ENCODE measurements at regions of chr19 and their contacts with region 1.

Region 1: DNA sequence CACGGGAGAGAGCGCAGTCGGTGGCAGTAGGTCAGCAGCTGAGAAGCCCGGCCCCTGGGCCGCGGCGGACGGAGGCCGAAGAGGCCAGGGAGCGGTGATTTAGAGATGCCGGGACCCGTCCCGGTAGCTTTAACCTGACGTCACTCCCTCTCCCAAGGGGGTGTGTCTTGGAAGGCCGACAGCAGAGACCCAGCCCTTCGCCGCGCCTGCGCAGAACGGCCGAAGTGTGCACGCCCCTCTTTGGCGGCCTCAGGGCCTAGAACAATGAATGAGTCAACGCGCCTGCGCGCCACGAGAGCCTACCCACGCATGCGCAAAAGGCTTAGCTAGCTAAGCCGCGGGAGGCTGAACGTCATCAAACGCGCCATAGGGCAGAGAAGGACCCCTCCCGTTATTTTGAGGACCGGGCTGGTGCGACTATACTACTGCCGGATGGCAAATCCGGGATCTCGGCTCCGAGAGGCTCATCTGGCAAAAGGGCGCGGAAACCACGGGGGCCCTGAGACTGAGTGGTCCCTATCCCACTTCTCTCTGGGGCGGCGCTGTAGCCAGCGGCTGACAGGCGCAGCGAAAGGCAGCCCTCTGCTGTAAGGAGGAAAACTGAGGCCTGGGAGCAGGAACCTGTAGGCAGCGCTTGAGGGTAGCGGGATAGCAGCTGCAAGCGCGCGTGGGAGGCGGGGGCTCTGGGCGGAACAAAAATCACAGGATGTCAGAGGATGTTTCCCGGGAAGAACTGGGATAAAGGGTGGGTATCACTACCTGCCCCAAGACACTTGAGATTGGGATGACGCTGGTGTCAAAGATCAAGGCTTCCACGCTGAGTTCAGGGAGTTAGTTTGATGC is at the starts of genes IRGQ and ZNF576:
- DNase-seq: peak; percentile 99 to 100 (median 100)
- ATAC-seq: peak; percentile 74 to 79
- H3K4me3 Mint-ChIP-seq: peak within 1 kb of the TSS; percentile 94 to 99 (median 96)
- H3K27ac Mint-ChIP-seq: peak within 1 kb of the TSS; percentile 96 to 100 (median 100)
- H3K4me1 Mint-ChIP-seq: peaks cover 26 to 53% (median 47%) of the 10 kb centered on the region in 4 donors
- H3K27me3 Mint-ChIP-seq: peaks cover 0 to 2% (median 0%) of the 10 kb centered on the region in 5 donors
- polyA plus RNA-seq, gene IRGQ: 0.37 to 1.1 (median 0.82) TPM
- polyA plus RNA-seq, gene ZNF576: 6.2 to 10.4 (median 9.3) TPM

Region 2: GRCh38 chr19:43337737-43338136 is 258.5 kb before region 1 on chr19:
- POLR2A ChIA-PET with region 1: no interaction called
- DNase-seq: no peak
- ATAC-seq: no peak
- H3K4me3 Mint-ChIP-seq: no peak overlapping the region
- H3K27ac Mint-ChIP-seq: no peak overlapping the region
- H3K4me1 Mint-ChIP-seq: peaks cover 0 to 6% (median 0%) of the 10 kb centered on the region in 4 donors
- H3K27me3 Mint-ChIP-seq: peaks cover 9 to 34% (median 22%) of the 10 kb centered on the region in 5 donors

Region 3: DNA sequence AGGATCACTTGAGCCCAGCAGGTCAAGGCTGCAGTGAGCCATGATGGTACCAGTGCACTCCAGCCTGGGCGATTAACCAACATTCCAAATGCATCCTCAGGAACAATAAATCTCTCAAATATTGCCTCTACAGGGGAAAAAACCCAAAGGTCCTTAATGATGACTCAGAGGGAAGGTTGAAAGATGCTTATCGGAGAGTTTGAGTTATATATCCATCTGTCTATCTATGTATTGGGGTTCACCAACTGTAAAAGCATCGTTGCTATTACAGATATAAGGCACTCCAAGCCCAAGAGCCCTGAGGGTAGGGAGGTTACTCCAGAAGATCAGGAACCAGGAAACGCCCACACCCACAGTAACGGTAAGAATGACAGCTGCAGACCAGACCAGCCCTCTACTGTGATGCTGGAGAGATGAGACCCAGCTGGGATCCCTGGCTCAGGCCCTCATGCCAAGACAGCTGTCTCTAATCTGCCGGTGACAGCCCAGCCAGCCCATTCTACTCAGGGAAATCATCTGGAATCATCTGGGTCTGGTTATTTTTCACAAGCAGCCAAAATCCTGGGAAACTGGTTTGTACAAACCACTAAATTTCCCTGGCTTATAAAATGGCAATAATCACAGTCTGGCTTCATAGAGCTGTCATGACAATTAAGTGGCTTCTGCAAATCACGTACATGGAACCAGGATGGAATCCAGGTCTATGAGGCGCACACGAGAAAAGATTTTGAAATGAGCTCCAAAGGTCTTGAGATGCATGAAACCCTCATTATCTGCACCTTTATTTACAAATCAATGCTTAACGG is 157.7 kb before region 1 on chr19:
- POLR2A ChIA-PET with region 1: interaction called, 10 read pairs
- DNase-seq: no peak
- ATAC-seq: peak; percentile 8 to 33
- H3K4me3 Mint-ChIP-seq: peak overlapping the region in 9 of 10 donors; percentile 19 to 66 (median 56)
- H3K27ac Mint-ChIP-seq: peak overlapping the region; percentile 74 to 98 (median 94)
- H3K4me1 Mint-ChIP-seq: peaks cover 17 to 62% (median 52%) of the 10 kb centered on the region in 4 donors
- H3K27me3 Mint-ChIP-seq: no peaks in the 10 kb centered on the region

Region 4: GRCh38 chr19:43470288-43470687 is 125.9 kb before region 1 on chr19:
- POLR2A ChIA-PET with region 1: no interaction called
- DNase-seq: peak; percentile 23 to 96 (median 86)
- ATAC-seq: peak; percentile 75 to 83
- H3K4me3 Mint-ChIP-seq: peak overlapping the region; percentile 16 to 82 (median 68)
- H3K27ac Mint-ChIP-seq: peak overlapping the region; percentile 89 to 100 (median 99)
- H3K4me1 Mint-ChIP-seq: peaks cover 33 to 81% (median 77%) of the 10 kb centered on the region in 4 donors
- H3K27me3 Mint-ChIP-seq: no peaks in the 10 kb centered on the region

Region 5: DNA sequence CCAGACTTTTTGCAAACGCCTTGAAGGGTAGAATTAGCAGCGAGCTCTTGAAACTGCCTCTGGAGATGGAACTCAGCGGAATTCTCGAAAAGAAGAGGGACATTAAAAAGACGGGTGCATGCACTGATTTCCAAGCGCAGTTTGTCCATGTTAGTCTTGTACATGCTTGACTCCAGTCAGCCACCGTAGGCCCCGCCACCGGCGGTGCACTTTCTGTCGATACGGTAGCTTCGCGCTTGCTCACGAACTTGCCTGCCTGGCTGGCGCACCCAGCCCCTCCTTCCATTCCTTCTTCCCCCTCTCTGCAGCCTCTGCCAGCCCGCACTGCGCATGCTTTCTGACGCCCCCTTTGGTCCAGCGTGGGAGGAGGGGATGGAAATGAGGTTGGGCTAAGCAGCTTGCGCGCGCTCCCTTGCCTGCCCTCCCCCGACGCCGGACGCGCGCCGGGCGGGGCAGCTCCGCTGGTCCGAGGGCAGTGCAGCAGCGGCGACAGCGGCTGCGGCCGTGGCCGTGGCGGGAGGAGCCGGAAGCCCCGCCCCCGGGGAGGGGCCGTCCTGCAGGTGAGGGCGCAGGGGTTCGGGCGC is 63.2 kb before region 1 on chr19 and contains the start of gene ZNF575:
- POLR2A ChIA-PET with region 1: interaction called, 51 read pairs
- DNase-seq: peak; percentile 70 to 93 (median 82)
- ATAC-seq: peak; percentile 60 to 70
- H3K4me3 Mint-ChIP-seq: peak within 1 kb of the TSS; percentile 88 to 100 (median 97)
- H3K27ac Mint-ChIP-seq: peak within 1 kb of the TSS; percentile 90 to 99 (median 98)
- H3K4me1 Mint-ChIP-seq: peaks cover 13 to 32% (median 20%) of the 10 kb centered on the region in 4 donors
- H3K27me3 Mint-ChIP-seq: no peaks in the 10 kb centered on the region
- polyA plus RNA-seq, gene ZNF575: 1.7 to 4.1 (median 3.0) TPM

Region 6: DNA sequence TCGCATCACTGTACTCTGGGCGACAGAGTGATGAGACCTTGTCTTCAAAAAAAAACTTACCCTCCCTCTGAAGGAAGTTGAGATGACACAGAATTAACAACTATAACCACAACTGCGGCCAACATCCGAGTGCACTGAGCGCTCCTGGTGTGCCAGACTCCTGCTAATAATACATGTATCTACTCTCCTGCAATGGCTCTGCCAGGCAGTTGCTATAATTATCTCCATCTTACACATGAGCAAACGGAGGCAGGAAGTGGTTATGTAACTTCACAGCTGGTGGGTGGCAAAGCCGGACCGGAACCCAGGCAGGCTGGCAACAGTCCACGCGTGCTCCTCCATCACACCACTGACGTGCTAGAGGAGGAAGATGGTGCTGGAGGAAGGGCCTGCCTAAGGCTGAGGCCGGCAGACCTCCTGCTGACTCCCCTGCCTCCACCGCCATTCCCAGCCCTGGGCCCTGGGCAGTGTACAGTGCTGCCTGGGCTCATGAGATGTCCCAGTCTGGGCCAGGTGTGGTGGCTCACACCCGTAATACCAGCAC is 33.5 kb before region 1 on chr19:
- POLR2A ChIA-PET with region 1: interaction called, 35 read pairs
- DNase-seq: peak; percentile 38 to 93 (median 76)
- ATAC-seq: peak; percentile 84 to 92
- H3K4me3 Mint-ChIP-seq: peak overlapping the region; percentile 75 to 91 (median 84)
- H3K27ac Mint-ChIP-seq: peak overlapping the region; percentile 91 to 98 (median 96)
- H3K4me1 Mint-ChIP-seq: peaks cover 35 to 68% (median 67%) of the 10 kb centered on the region in 4 donors
- H3K27me3 Mint-ChIP-seq: no peaks in the 10 kb centered on the region

Region 7: DNA sequence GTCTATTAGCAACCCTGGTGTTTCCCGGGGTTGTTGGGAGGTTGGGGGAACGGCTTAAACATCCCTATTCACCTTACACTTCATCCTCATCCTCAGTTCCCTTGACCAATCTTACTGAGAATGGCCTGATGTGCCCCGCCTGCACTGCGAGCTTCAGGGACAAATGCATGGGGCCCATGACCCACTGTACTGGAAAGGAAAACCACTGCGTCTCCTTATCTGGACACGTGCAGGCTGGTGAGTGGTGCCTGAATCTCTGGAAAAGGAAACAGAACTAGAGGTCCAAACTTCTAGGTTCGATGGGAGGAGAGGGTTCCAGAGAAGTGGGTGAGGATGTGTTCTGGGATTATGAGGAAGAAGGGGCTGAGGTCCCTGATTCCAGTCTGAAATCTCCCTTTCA is 14.8 kb before region 1 on chr19:
- POLR2A ChIA-PET with region 1: interaction called, 55 read pairs
- DNase-seq: no peak
- ATAC-seq: no peak
- H3K4me3 Mint-ChIP-seq: peak overlapping the region in 7 of 10 donors; percentile 15 to 75 (median 36)
- H3K27ac Mint-ChIP-seq: peak overlapping the region in 6 of 10 donors; percentile 26 to 95 (median 54)
- H3K4me1 Mint-ChIP-seq: peaks cover 19 to 49% (median 32%) of the 10 kb centered on the region in 4 donors
- H3K27me3 Mint-ChIP-seq: no peaks in the 10 kb centered on the region

Region 8: GRCh38 chr19:43668406-43669158 is 72.4 kb after region 1 on chr19:
- POLR2A ChIA-PET with region 1: interaction called, 12 read pairs
- DNase-seq: peak; percentile 87 to 97 (median 93)
- ATAC-seq: peak; percentile 80 to 88
- H3K4me3 Mint-ChIP-seq: peak overlapping the region; percentile 83 to 96 (median 88)
- H3K27ac Mint-ChIP-seq: peak overlapping the region; percentile 21 to 94 (median 84)
- H3K4me1 Mint-ChIP-seq: peaks cover 24 to 53% (median 51%) of the 10 kb centered on the region in 4 donors
- H3K27me3 Mint-ChIP-seq: no peaks in the 10 kb centered on the region

Region 9: DNA sequence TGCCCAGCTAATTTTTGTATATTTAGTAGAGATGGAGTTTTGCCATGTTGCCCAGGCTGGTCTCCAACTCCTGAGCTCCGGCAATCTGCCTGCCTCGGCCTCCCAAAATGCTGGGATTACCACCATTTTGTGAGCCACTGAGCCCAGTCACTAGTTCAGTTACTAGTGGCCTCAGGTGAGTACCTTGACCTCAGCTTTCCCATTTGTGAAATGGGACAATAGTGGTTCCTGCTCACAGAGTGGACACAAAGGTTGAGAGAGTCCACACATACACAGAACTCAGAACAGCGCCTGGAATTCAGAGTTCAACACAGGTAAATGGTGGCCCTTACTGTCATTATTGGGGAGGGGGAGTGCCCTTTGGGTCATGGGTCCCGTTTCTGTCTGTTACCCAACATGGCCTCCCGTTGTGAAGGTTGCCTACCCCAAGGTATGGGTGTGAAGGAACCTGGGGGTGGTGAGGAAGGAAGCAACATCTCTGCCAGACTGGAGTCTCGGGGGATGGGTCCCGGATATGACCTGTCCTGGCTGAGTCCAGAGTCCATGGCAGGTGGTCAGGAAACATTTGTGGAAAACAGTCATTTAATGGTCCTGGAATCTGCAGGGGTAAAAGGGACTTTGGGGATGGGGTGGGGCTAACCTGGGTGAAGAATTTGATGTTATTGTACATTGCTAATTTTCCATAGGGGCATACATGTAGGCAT is 107.9 kb after region 1 on chr19:
- POLR2A ChIA-PET with region 1: no interaction called
- DNase-seq: no peak
- ATAC-seq: no peak
- H3K4me3 Mint-ChIP-seq: peak overlapping the region in 1 of 10 donors; percentile 8
- H3K27ac Mint-ChIP-seq: peak overlapping the region in 2 of 10 donors; percentile 8 to 50
- H3K4me1 Mint-ChIP-seq: peaks cover 13 to 27% (median 21%) of the 10 kb centered on the region in 4 donors
- H3K27me3 Mint-ChIP-seq: peaks cover 0 to 25% (median 8%) of the 10 kb centered on the region in 5 donors